ENCODE measurements at regions of chr17 and their contacts with region 1.

Region 1: GRCh38 chr17:16380640-16381495 is at the start of gene UBB:
- DNase-seq: peak; percentile 99
- H3K4me3 ChIP-seq: peak within 1 kb of the TSS; percentile 94
- H3K27ac ChIP-seq: peak within 1 kb of the TSS; percentile 97
- H3K4me1 ChIP-seq: peaks cover 4% of the 10 kb centered on the region
- H3K27me3 ChIP-seq: no peaks in the 10 kb centered on the region
- CTCF ChIP-seq: 0 out of 2 replicates have a peak, but pooled peaks have one; percentile 15
- total RNA-seq, gene UBB: 2,497 and 2,658 TPM in 2 replicates

Region 2: DNA sequence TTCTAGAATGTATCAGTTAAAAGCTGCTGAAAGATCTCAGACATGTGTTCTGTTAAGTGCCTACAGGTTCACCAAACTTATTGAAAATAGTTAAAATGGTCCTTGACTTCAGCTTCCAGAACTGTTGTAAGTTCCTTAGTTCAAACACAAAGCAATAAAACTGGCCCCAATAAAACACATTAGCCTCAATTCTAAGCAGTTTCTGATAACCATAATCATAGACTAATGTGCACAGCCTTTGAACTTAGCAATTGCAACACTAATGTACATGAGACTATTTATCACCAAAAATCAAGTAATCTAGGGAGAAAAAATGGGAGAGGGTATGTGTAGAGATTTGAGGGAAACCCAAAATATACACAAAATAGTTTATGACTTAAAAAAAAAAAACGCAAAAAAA is 148.5 kb before region 1 on chr17:
- CTCF ChIA-PET with region 1: no interaction called
- POLR2A ChIA-PET with region 1: no interaction called
- intact Hi-C with region 1: no loop called
- DNase-seq: no peak
- H3K4me3 ChIP-seq: no peak overlapping the region
- H3K27ac ChIP-seq: no peak overlapping the region
- H3K4me1 ChIP-seq: peaks cover 4% of the 10 kb centered on the region
- H3K27me3 ChIP-seq: no peaks in the 10 kb centered on the region
- CTCF ChIP-seq: no peak

Region 3: GRCh38 chr17:16438557-16439302 is 57.9 kb after region 1 on chr17:
- CTCF ChIA-PET with region 1: no interaction called
- POLR2A ChIA-PET with region 1: interaction called, 10 read pairs
- intact Hi-C with region 1: loop called (anchors 2 kb)
- DNase-seq: peak; percentile 100
- H3K4me3 ChIP-seq: peak overlapping the region; percentile 73
- H3K27ac ChIP-seq: peak overlapping the region; percentile 90
- H3K4me1 ChIP-seq: peaks cover 37% of the 10 kb centered on the region
- H3K27me3 ChIP-seq: no peaks in the 10 kb centered on the region
- CTCF ChIP-seq: no peak

Region 4: DNA sequence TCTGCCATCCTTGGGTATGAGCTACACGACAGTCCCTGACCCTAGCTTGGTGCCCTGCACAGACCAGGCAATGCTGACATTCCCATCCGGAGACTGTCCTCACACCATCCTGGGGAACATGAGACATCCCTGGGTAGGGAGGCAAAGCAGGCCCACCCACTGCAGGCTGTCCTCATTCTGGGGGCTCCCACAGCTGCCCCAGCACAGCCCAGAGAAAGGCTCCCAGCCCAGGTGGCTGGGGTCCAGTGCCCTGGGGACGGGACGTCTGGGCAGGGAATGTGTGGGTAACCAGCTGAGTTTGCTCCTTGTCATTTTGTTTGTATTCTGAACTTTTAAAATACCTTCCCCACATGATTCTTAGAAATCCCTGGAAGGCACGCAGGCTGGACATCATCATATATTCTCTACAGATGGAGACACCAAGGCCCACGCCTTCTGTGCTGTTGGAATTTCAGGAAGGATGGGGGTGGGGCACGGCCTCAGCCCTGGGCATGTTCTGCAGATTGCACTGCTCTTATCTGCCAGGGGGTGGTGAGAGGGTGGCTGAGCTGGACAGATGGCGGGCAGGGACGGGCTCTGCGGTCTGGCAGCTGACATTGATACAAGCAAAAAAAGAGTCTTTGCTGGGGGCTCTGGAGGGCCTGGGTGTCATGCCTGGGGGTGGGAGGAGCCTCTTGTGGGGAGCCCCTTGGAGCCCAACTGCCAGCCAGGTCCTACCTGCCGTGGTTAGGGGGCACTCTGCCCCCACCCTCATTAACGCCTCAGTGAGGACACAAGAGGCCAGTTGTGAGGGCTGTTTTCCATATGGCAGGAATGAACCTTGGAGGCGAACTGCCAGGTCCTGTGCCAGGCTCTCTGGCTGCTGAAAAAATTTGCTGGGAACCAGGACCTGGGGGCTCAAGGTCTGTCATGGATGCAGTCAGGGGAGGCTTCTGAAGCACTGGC is 82.8 kb after region 1 on chr17:
- CTCF ChIA-PET with region 1: no interaction called
- POLR2A ChIA-PET with region 1: no interaction called
- intact Hi-C with region 1: no loop called
- DNase-seq: no peak
- H3K4me3 ChIP-seq: no peak overlapping the region
- H3K27ac ChIP-seq: no peak overlapping the region
- H3K4me1 ChIP-seq: no peaks in the 10 kb centered on the region
- H3K27me3 ChIP-seq: no peaks in the 10 kb centered on the region
- CTCF ChIP-seq: no peak

Region 5: GRCh38 chr17:16599537-16599936 is 218.7 kb after region 1 on chr17:
- CTCF ChIA-PET with region 1: no interaction called
- POLR2A ChIA-PET with region 1: no interaction called
- intact Hi-C with region 1: no loop called
- DNase-seq: no peak
- H3K4me3 ChIP-seq: no peak overlapping the region
- H3K27ac ChIP-seq: no peak overlapping the region
- H3K4me1 ChIP-seq: no peaks in the 10 kb centered on the region
- H3K27me3 ChIP-seq: no peaks in the 10 kb centered on the region
- CTCF ChIP-seq: no peak

Region 6: DNA sequence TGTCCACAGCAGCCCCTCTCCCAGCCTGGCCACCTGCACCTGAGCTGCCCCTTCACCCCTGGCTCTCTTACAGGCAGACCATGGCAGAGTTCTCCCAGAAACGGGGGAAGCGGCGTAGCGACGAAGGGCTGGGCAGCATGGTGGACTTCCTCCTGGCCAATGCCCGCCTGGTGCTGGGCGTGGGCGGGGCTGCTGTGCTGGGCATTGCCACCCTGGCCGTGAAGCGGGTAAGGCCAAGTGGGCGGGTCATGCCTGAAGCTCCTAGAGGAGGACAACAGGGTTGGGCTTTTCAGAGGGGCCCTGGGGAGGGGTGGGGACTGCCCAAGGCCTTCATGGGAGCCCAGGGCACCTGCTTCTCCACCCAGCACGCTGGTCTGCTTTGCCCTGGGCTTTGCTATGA is 1881.8 kb after region 1 on chr17:
- CTCF ChIA-PET with region 1: interaction called, 12 read pairs
- POLR2A ChIA-PET with region 1: no interaction called
- intact Hi-C with region 1: no loop called
- DNase-seq: no peak
- H3K4me3 ChIP-seq: no peak overlapping the region
- H3K27ac ChIP-seq: no peak overlapping the region
- H3K4me1 ChIP-seq: peaks cover 4% of the 10 kb centered on the region
- H3K27me3 ChIP-seq: no peaks in the 10 kb centered on the region
- CTCF ChIP-seq: no peak